ENCODE measurements at regions of chr10 and their contacts with region 1.

Region 1: GRCh38 chr10:24299578-24300260 is 90.8 kb downstream of the KIAA1217 start:
- DNase-seq: peak; percentile 82
- ATAC-seq: peak; percentile 100
- H3K4me3 ChIP-seq: peak overlapping the region; percentile 34; the same call in 1 of the 2 replicates
- H3K27ac ChIP-seq: peak overlapping the region; percentile 86
- H3K4me1 ChIP-seq: peaks cover 18% of the 10 kb centered on the region
- H3K27me3 ChIP-seq: no peaks in the 10 kb centered on the region
- CTCF ChIP-seq: no peak

Region 2: GRCh38 chr10:24344279-24344678 is 44.6 kb after region 1 on chr10:
- CTCF ChIA-PET with region 1: no interaction called
- POLR2A ChIA-PET with region 1: no interaction called
- intact Hi-C with region 1: loop called (anchors 5 kb)
- DNase-seq: peak; percentile 94
- ATAC-seq: peak; percentile 93
- H3K4me3 ChIP-seq: peak overlapping the region; percentile 59; the same call in 1 of the 2 replicates
- H3K27ac ChIP-seq: peak overlapping the region; percentile 92
- H3K4me1 ChIP-seq: peaks cover 38% of the 10 kb centered on the region
- H3K27me3 ChIP-seq: no peaks in the 10 kb centered on the region
- CTCF ChIP-seq: no peak